Breast epithelium (tissue), 4 donors: ENCODE measurements at regions of chr4 and their contacts with region 1.

Region 1: DNA sequence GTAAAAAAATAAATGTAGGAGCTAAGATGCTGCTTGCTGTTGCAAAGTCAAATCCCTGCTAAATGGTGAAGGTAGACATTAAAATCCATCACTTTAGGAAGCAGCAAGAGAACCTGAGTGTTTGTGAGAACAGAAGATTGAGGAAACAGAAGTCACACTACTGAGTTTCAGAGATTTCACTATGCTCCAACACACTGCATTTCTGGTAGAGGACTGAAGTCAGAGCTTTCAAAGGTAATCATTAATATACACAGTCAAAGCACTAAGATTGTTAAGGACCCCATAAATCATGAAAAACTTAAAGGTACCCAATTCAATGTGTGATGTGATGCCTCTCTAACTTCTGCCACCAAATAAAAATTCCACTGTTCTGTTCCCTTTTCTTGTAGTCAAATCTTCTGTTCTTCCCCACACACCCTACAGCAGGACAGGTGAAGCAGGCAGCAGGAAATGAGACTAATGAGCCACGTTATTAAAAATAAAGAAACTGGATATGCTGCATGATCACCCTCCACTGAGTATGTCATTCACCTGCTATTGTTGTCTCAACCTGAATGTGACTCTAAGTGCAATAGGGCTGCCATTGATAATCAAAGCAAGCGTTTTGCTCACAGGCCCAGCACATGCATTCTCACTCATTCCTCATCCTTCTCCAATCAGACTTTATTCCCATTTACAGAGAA is 28.9 kb upstream of the APELA start:
- DNase-seq: no peak
- H3K4me3 ChIP-seq: no peak overlapping the region
- H3K27ac ChIP-seq: no peak overlapping the region
- H3K4me1 ChIP-seq: no peaks in the 10 kb centered on the region
- H3K27me3 ChIP-seq: no peaks in the 10 kb centered on the region
- CTCF ChIP-seq: no peak
- POLR2A ChIP-seq: no peak

Region 2: DNA sequence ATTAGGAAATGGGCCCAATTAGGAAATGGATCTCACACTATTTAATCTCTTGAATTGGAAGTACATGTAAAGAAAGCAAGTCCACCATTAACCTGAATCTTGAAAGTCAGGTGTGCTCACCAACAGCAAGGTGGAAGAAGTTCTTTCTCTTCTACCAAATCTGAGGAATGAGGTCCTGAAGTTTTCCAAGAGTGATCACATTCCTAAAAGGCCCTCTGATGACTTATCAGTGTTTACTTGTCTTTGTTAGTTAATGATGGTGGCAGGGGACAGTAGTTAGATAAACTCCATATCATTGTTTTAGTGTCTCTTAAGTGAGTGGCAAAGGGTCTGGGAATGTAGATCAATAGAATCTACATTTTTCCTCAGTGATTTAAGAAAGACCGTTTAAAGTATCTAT is 32.4 kb before region 1 on chr4:
- intact Hi-C with region 1: no loop called
- DNase-seq: no peak
- H3K4me3 ChIP-seq: no peak overlapping the region
- H3K27ac ChIP-seq: no peak overlapping the region
- H3K4me1 ChIP-seq: no peaks in the 10 kb centered on the region
- H3K27me3 ChIP-seq: no peaks in the 10 kb centered on the region
- CTCF ChIP-seq: no peak
- POLR2A ChIP-seq: no peak

Region 3: DNA sequence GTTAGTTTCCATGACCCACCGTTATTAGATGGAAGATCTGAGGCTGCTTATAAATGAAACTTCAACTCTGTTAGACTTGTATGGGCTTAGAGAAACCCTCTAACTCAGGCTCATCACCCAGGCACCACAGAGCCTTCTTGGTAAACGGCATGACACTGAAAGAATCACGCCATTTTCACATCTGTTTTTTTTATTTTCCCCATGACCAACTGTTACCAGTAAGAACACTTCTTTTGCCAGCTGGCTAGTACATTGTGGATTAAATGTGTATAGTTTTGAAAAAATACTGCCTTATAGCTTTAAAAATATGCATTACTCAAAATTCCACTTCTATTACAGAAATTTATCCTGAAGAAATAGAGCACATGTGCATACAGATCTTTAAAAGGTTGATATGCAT is 19.2 kb before region 1 on chr4:
- intact Hi-C with region 1: loop called (anchors 1 kb)
- DNase-seq: no peak
- H3K4me3 ChIP-seq: no peak overlapping the region
- H3K27ac ChIP-seq: no peak overlapping the region
- H3K4me1 ChIP-seq: no peaks in the 10 kb centered on the region
- H3K27me3 ChIP-seq: no peaks in the 10 kb centered on the region
- CTCF ChIP-seq: no peak
- POLR2A ChIP-seq: no peak

Region 4: GRCh38 chr4:165398570-165398969 is 550.5 kb after region 1 on chr4:
- intact Hi-C with region 1: no loop called
- DNase-seq: no peak
- H3K4me3 ChIP-seq: no peak overlapping the region
- H3K27ac ChIP-seq: no peak overlapping the region
- H3K4me1 ChIP-seq: no peaks in the 10 kb centered on the region
- H3K27me3 ChIP-seq: no peaks in the 10 kb centered on the region
- CTCF ChIP-seq: no peak
- POLR2A ChIP-seq: no peak

Region 5: GRCh38 chr4:165454417-165454816 is 606.3 kb after region 1 on chr4:
- intact Hi-C with region 1: no loop called
- DNase-seq: no peak
- H3K4me3 ChIP-seq: no peak overlapping the region
- H3K27ac ChIP-seq: no peak overlapping the region
- H3K4me1 ChIP-seq: peaks cover 0 to 5% of the 10 kb centered on the region in 2 donors
- H3K27me3 ChIP-seq: no peaks in the 10 kb centered on the region
- CTCF ChIP-seq: no peak
- POLR2A ChIP-seq: no peak